ENCODE measurements at regions of chr5 and their contacts with region 1.

Region 1: DNA sequence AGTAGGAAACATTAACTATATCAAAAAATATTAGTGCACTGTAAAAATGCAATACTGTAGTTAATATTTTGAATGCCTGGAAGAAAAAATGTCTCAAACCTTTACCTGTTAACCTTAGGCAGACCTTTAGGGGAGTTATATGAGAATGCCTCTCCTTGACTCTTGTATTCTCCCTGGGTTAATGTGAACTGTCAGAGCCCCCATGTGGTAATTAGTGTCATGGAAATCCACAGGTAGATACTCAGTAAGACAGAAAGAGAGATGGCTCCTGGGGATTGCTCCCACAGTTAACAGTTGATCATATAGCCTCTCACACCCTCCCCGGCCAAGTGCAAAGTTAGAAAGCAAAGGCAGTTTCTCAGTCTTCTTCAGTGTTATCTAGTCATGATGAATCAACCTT is 742.8 kb downstream of the NR2F1-AS1 start:
- DNase-seq: no peak
- ATAC-seq: no peak
- H3K4me3 ChIP-seq: no peak overlapping the region
- H3K4me3 Mint-ChIP-seq: no peak overlapping the region
- H3K27ac ChIP-seq: no peak overlapping the region
- H3K27ac Mint-ChIP-seq: no peak overlapping the region
- H3K4me1 ChIP-seq: no peaks in the 10 kb centered on the region
- H3K4me1 Mint-ChIP-seq: no peaks in the 10 kb centered on the region
- H3K27me3 ChIP-seq: no peaks in the 10 kb centered on the region
- H3K27me3 Mint-ChIP-seq: no peaks in the 10 kb centered on the region

Region 2: GRCh38 chr5:93831449-93831848 is 993.2 kb after region 1 on chr5:
- CTCF ChIA-PET with region 1: no interaction called
- POLR2A ChIA-PET with region 1: interaction called in 1 of 2 experiments, 16 read pairs
- DNase-seq: no peak
- ATAC-seq: no peak
- H3K4me3 ChIP-seq: no peak overlapping the region
- H3K4me3 Mint-ChIP-seq: no peak overlapping the region
- H3K27ac ChIP-seq: no peak overlapping the region
- H3K27ac Mint-ChIP-seq: no peak overlapping the region
- H3K4me1 ChIP-seq: no peaks in the 10 kb centered on the region
- H3K4me1 Mint-ChIP-seq: no peaks in the 10 kb centered on the region
- H3K27me3 ChIP-seq: no peaks in the 10 kb centered on the region
- H3K27me3 Mint-ChIP-seq: no peaks in the 10 kb centered on the region